PC-9 (cell line): ENCODE measurements at regions of chr15 and their contacts with region 1.

Region 1: GRCh38 chr15:92845126-92845508 is 55.0 kb upstream of the CHD2 start:
- DNase-seq: peak in 1 of 2 experiments; percentile 86
- H3K4me3 ChIP-seq: no peak overlapping the region; the same call in 1 of the 2 replicates
- H3K27ac ChIP-seq: peak overlapping the region; percentile 89
- H3K4me1 ChIP-seq: peaks cover 42% of the 10 kb centered on the region
- H3K27me3 ChIP-seq: no peaks in the 10 kb centered on the region
- CTCF ChIP-seq: no peak

Region 2: GRCh38 chr15:92820236-92821021 is 24.7 kb before region 1 on chr15:
- CTCF ChIA-PET with region 1: no interaction called
- POLR2A ChIA-PET with region 1: interaction called, 10 read pairs
- intact Hi-C with region 1: no loop called
- DNase-seq: peak; percentile 91 to 96
- H3K4me3 ChIP-seq: peak overlapping the region; percentile 56
- H3K27ac ChIP-seq: peak overlapping the region; percentile 96
- H3K4me1 ChIP-seq: peaks cover 57% of the 10 kb centered on the region
- H3K27me3 ChIP-seq: no peaks in the 10 kb centered on the region
- CTCF ChIP-seq: no peak

Region 3: GRCh38 chr15:92864127-92864814 is 19.2 kb after region 1 on chr15:
- CTCF ChIA-PET with region 1: interaction called, 3 read pairs
- POLR2A ChIA-PET with region 1: no interaction called
- intact Hi-C with region 1: loop called (anchors 2 kb)
- DNase-seq: no peak
- H3K4me3 ChIP-seq: no peak overlapping the region
- H3K27ac ChIP-seq: no peak overlapping the region
- H3K4me1 ChIP-seq: peaks cover 22% of the 10 kb centered on the region
- H3K27me3 ChIP-seq: no peaks in the 10 kb centered on the region
- CTCF ChIP-seq: no peak

Region 4: DNA sequence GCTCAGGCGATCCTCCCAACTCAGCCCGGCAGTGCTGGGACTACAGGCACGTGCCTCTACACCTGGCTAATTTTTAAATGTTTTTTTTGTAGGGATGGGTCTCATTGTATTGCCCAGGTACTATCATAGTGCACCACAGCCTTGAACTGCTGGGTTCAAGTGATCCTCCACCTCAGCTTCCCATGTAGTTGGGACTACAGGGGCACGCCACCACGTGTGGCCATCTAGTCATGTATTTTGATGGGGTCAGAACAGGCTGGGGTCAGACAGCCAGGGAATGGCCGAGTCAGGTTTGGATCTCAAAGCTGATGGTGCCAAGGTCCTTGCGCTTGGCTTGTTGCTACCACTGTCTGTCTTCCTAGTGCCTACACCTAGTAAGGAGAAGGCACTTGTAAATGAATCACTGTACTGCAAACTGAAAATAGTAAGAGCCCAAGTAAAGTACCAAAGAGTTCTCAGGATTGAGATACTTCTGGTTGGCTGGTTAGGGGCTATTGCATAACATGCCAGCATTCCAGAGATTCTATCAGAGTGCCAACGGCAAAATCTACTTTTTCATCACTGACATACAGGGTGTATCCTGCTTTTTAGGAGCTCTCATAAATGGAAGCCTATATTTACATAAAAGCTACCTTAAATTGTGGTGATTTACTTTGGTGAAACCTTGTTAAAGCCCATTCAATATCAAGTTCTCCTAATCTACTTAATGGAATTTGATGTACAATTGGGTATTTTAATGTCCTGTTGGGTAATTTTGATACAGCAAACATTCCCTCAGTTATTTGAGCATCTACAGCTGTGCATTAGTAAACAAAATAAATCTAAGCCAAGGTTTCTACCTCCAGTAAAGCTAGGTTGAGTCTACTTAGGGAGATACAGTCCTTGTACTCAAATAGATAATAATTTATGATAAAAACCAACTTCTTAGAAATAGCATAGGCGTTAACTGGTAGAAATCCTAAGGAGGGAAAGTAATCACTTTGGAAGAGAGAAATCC is 24.2 kb after region 1 on chr15:
- CTCF ChIA-PET with region 1: interaction called, 11 read pairs
- POLR2A ChIA-PET with region 1: no interaction called
- intact Hi-C with region 1: loop called (anchors 2 kb)
- DNase-seq: peak; percentile 41 to 92
- H3K4me3 ChIP-seq: no peak overlapping the region
- H3K27ac ChIP-seq: peak overlapping the region; percentile 74
- H3K4me1 ChIP-seq: peaks cover 33% of the 10 kb centered on the region
- H3K27me3 ChIP-seq: no peaks in the 10 kb centered on the region
- CTCF ChIP-seq: no peak